ENCODE measurements at regions of chr7 and their contacts with region 1.

Region 1: DNA sequence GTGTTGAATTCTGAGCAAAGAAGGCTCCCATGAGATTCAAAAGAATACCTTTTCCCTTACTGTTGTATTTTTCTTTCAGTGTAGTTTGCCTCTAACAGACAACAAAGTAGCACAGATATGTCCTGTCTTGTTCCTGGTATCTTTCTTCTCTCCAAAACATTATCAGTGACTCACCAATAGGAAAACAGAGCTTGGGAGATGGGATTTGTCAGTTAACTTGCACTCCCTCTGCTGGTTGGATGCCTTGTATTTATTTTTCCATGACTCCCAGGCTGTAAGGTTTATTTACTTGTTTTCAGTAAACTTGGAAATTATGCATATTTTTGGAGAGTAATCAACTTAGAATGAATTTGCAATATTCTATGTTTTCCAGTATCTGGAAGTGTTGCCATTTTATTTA is 129.7 kb downstream of the SAMD9 start:
- DNase-seq: peak; percentile 45
- H3K4me3 Mint-ChIP-seq: no peak overlapping the region
- H3K27ac Mint-ChIP-seq: peak overlapping the region; percentile 59
- H3K4me1 Mint-ChIP-seq: peaks cover 26% of the 10 kb centered on the region
- H3K27me3 Mint-ChIP-seq: no peaks in the 10 kb centered on the region
- CTCF ChIP-seq: peak; percentile 30

Region 2: GRCh38 chr7:92973974-92974373 is 14.1 kb before region 1 on chr7:
- CTCF ChIA-PET with region 1: interaction called, 12 read pairs
- POLR2A ChIA-PET with region 1: interaction called, 8 read pairs
- intact Hi-C with region 1: no loop called
- DNase-seq: peak; percentile 3
- H3K4me3 Mint-ChIP-seq: peak overlapping the region; percentile 5
- H3K27ac Mint-ChIP-seq: peak overlapping the region; percentile 37
- H3K4me1 Mint-ChIP-seq: peaks cover 14% of the 10 kb centered on the region
- H3K27me3 Mint-ChIP-seq: no peaks in the 10 kb centered on the region
- CTCF ChIP-seq: no peak